Pancreas (tissue), 10 donors: ENCODE measurements at regions of chrX and their contacts with region 1.

Region 1: DNA sequence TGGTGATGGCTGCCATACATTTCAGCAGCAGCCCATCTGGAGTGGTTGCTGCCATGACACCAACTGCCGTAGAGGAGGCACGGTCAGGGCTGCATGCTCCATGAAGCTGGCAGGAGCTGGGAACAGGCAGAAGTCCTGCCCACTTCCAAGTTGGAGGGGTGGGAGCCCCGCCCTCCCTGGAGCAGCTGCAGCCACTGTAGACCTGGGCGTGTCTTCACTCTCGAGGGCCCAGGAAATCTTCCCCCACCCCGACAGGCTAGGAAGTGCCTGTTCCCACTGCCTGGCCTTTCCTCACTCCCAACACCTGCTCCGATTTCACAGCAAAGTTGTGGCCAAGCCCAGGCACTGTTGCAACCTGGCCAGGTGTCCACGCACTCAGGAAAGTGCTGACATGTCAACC is 42.3 kb downstream of the NALF2 start:
- DNase-seq: peak in 3 of 6 donors; percentile 27 to 31 (median 29)
- ATAC-seq: peak in 1 of 4 donors; percentile 60
- H3K4me3 ChIP-seq: no peak overlapping the region
- H3K27ac ChIP-seq: no peak overlapping the region
- H3K4me1 ChIP-seq: no peaks in the 10 kb centered on the region
- H3K27me3 ChIP-seq: peaks cover 0 to 5% (median 0%) of the 10 kb centered on the region in 4 donors
- CTCF ChIP-seq: no peak

Region 2: GRCh38 chrX:69179380-69179911 is 367.0 kb before region 1 on chrX:
- intact Hi-C with region 1: no loop called
- DNase-seq: no peak
- ATAC-seq: peak in 2 of 4 donors; percentile 72 to 81
- H3K4me3 ChIP-seq: no peak overlapping the region
- H3K27ac ChIP-seq: no peak overlapping the region
- H3K4me1 ChIP-seq: no peaks in the 10 kb centered on the region
- H3K27me3 ChIP-seq: no peaks in the 10 kb centered on the region
- CTCF ChIP-seq: no peak

Region 3: DNA sequence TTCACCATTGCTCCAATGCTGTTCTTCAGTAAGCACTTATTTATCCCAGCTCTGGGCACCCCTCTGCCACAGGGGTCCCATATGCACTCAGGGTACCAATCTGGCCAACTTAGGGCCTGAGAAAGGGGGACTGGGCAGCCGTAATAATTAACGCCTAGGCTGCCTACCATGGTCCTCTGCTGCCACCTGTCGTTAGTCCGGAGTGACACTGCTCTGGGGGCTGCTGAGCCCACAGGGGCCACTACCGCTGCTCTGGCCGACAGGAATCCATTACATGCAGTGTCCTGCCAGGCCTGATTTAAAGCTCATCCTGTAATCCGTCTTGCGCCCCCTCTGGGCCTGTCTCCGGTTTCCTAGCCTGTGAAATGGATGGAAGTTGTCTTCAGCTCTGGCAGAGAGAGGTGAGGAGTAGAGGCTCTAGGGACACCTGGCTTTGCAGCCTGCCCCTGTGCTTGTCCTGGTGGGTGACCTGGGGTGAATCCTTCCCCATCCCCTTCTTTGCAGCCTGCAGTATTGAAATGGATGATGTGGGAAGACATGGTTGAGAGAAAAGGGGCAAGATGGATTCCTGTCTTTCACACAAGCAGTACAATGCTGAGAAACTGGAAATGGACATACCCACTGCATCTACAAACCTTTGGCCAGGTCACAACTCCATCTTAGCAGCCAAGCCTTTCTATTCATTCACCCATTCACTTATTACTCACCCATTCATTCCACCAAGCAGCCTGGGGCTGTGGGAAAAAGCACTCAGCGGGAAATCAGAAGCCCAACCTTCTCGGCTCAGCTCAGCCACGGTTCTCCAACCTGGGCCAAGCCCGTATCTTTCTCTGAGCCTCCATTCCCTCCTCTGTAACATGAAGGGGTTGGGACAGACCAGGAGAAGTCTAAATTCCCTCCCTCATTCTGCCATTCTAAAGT is 158.6 kb before region 1 on chrX:
- intact Hi-C with region 1: no loop called
- DNase-seq: peak in 5 of 6 donors; percentile 3 to 73 (median 46)
- ATAC-seq: peak; percentile 43 to 85 (median 82)
- H3K4me3 ChIP-seq: no peak overlapping the region
- H3K27ac ChIP-seq: no peak overlapping the region
- H3K4me1 ChIP-seq: no peaks in the 10 kb centered on the region
- H3K27me3 ChIP-seq: peaks cover 0 to 31% (median 2%) of the 10 kb centered on the region in 4 donors
- CTCF ChIP-seq: peak; percentile 32 to 73 (median 60)

Region 4: DNA sequence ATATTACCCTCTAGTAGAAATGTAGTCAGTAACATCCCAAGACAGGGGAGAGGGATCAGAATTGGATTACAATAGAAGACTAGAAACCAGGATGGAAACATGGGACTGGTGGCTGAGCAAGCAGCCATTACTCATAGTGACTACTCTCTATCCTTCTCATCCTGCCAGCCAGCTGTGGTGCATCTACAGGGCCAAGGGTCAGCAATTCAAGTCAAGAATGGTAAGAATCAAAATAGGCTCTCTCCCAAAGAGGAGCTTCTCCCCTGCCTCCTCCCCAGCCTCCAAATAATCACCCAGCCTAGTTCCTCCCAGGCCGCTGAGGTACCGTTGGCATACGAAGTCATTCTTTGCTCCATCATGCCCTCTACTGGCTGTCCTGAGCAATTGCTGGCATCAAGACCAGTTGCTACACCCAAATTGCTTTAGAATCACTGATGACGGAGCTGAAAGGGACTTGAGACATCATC is 483.9 kb after region 1 on chrX:
- intact Hi-C with region 1: loop called in 1 of 3 experiments (anchors 10 kb)
- DNase-seq: peak in 2 of 6 donors; percentile 13 to 54
- ATAC-seq: peak; percentile 71 to 94 (median 87)
- H3K4me3 ChIP-seq: no peak overlapping the region
- H3K27ac ChIP-seq: no peak overlapping the region
- H3K4me1 ChIP-seq: no peaks in the 10 kb centered on the region
- H3K27me3 ChIP-seq: peaks cover 0 to 17% (median 0%) of the 10 kb centered on the region in 4 donors
- CTCF ChIP-seq: peak; percentile 53 to 75 (median 62)